ENCODE measurements at regions of chr3 and their contacts with region 1.

Region 1: GRCh38 chr3:146189519-146190173 is 28.7 kb upstream of the PLOD2 start:
- DNase-seq: peak; percentile 17
- H3K4me3 ChIP-seq: no peak overlapping the region
- H3K27ac ChIP-seq: no peak overlapping the region
- H3K4me1 ChIP-seq: no peaks in the 10 kb centered on the region
- H3K27me3 ChIP-seq: no peaks in the 10 kb centered on the region
- CTCF ChIP-seq: peak; percentile 43 to 87 (median 74)
- POLR2A ChIP-seq: no peak

Region 2: DNA sequence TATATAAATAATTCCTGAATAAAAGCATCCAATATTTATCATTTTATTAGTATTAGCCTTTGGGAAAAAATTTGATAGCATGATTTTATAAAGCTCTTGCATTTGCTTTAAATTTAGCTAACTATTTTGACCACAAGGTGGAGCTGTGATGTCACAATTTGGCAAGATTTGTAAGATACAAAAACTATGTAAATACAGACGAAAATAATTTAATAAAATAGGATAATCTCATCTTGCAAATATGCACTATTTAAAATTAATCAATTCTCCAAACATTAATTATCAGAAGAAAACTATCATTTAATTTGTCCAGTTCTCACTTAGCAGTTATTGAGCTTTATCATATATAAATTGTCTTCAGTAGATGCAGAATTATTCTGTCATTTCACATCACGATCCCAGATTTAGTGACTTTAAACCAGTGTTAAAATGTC is 124.1 kb before region 1 on chr3:
- intact Hi-C with region 1: loop called (anchors 10 kb)
- DNase-seq: peak; percentile 34
- H3K4me3 ChIP-seq: no peak overlapping the region
- H3K27ac ChIP-seq: no peak overlapping the region
- H3K4me1 ChIP-seq: no peaks in the 10 kb centered on the region
- H3K27me3 ChIP-seq: no peaks in the 10 kb centered on the region
- CTCF ChIP-seq: peak; percentile 45 to 87 (median 53)
- POLR2A ChIP-seq: no peak

Measured in testis (tissue), 5 donors.